ENCODE measurements at regions of chr6 and their contacts with region 1.

Region 1: GRCh38 chr6:158072083-158072721 is 90.5 kb downstream of the SYNJ2 start:
- DNase-seq: no peak
- H3K4me3 ChIP-seq: no peak overlapping the region
- H3K27me3 ChIP-seq: no peaks in the 10 kb centered on the region
- CTCF ChIP-seq: peak; percentile 81

Region 2: GRCh38 chr6:157946865-157947532 is 125.2 kb before region 1 on chr6:
- CTCF ChIA-PET with region 1: interaction called, 13 read pairs
- POLR2A ChIA-PET with region 1: no interaction called
- DNase-seq: no peak
- H3K4me3 ChIP-seq: no peak overlapping the region
- H3K27me3 ChIP-seq: no peaks in the 10 kb centered on the region
- CTCF ChIP-seq: peak; percentile 48

Region 3: DNA sequence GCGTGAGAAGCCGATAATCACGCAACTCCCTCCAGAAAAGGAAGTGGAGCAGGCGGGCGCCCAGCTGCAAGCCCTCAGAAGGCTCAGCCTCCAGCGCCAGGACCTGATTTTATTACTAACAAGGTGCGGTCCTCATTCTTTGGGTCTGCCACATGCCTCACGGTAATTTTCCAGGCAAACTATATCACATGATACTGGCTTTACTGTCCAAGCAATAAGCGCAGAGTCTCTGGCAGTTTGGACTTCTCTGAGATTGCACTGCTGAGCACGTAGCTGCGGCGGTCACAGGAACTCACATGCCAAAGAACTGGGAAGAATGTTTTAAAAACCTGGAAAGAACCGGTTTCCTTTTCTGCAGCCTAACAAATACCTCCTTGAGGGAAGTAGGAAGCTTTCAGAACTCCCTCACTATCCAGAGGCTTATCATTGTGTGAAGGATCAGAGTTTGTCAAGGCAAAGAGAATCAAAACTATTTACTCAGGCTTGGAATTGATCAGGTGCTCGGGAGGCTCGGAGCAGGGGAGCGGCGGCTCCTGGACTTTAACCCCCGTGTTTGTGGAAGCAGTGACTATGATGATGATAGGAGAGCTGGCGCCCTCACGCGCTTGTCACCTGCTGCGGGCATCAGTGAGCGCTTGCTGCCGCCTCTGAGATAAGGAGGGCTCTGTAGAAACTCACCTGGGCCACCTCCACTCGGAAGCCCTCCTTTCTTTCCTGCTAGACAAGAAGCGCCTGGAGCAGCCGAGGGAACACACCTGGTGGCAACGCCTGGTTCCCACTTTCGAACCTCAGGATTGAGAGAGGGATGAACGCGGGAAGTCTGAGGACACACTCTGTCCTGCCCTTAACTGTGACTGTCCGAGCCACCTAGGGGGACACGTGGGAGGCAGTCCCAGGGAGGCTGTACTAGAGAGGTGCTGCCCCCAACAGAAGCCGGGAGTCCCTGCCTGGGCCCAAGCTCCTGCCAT is 117.8 kb before region 1 on chr6:
- CTCF ChIA-PET with region 1: interaction called, 10 read pairs
- POLR2A ChIA-PET with region 1: no interaction called
- DNase-seq: peak; percentile 47
- H3K4me3 ChIP-seq: peak overlapping the region; percentile 19
- H3K27me3 ChIP-seq: no peaks in the 10 kb centered on the region
- CTCF ChIP-seq: no peak

Region 4: GRCh38 chr6:157981395-157982296 is 90.6 kb before region 1 on chr6 and contains the start of gene SYNJ2:
- CTCF ChIA-PET with region 1: interaction called, 21 read pairs
- POLR2A ChIA-PET with region 1: no interaction called
- DNase-seq: peak; percentile 55
- H3K4me3 ChIP-seq: peak within 1 kb of the TSS; percentile 88
- H3K27me3 ChIP-seq: no peaks in the 10 kb centered on the region
- CTCF ChIP-seq: peak; percentile 62
- polyA plus RNA-seq, gene SYNJ2: 24.3 and 29.9 TPM in 2 replicates

Region 5: DNA sequence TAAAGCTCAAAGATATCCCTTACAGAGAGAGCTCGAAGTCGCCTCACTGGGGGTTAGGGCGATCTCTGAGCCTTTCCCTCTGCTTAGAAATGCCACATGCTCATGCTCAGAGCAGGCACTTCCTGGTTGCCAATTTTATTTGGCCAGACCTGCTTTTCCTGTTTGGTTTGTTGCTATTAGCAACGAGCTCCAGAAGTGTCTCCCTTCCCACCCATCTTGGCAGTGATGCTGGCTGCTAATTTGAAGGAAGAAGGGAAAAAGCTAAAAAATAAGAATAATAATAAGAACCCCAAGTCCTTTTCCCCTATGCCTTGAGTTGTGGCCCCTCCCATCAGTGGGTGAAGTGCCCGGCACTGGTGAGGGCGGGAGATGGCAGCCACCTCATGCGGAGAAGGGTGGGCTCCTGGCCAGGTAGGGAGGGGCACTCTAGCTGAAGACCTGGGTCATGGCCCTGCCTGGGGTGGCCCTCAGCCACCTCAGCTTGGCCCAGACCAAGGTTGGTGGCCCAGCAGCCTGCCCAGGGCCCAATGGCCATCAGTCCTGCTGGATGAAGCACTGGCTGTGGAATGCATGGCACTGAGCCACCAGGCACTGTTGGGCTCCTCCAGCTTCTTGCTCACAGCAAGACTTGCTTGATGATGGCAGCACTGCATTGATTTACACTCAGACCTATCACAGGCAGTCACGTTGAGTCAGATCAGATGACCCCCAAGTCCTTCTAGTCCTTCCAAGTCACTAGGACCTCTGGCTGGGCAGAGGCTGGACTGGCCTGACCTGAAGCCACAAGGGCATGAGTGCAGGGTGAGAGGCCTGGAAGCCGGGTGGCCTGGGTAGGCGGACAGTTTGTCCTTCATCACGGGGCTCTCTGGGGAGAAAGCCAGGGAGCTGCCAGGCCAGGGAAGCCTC is 11.5 kb before region 1 on chr6:
- CTCF ChIA-PET with region 1: interaction called, 23 read pairs
- POLR2A ChIA-PET with region 1: no interaction called
- DNase-seq: peak; percentile 68
- H3K4me3 ChIP-seq: no peak overlapping the region
- H3K27me3 ChIP-seq: no peaks in the 10 kb centered on the region
- CTCF ChIP-seq: no peak

Region 6: DNA sequence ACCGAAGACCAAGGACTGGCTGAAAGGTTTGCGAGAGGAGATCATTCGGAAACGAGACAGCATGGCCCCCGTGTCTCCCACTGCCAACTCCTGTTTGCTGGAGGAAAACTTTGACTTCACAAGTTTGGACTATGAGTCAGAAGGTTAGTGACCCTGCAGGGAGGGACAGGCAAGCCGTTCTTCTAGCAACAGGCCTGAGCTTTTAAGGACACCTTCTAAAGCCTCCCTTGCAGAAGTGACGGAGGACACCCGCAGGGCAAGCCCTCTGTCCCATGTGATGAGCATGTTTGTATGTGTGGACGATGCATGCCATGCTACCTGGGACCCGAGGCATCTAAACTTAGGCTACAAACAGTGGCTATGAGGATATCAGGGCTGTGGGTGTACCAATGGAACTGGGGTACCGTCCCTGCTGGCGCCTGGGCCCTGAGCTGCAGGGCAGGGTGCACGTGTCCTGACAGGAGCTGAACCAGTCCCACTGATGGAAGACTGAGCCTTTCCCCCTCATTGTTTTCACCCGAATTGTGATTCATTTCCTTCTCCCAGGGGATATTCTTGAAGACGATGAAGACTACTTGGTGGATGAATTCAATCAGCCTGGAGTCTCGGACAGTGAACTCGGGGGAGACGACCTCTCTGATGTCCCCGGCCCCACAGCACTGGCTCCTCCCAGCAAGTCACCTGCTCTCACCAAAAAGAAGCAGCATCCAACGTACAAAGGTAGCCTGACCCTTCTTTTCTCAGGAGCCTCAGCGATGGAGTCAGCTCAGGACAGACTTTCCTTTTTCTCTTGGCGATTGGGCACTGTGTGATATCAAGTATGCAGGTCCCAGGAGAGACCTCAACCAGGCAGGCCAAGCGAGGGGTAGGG is 11.5 kb after region 1 on chr6:
- CTCF ChIA-PET with region 1: interaction called, 11 read pairs
- POLR2A ChIA-PET with region 1: no interaction called
- DNase-seq: no peak
- H3K4me3 ChIP-seq: no peak overlapping the region
- H3K27me3 ChIP-seq: no peaks in the 10 kb centered on the region
- CTCF ChIP-seq: no peak

Region 7: GRCh38 chr6:158174514-158174913 is 102.3 kb after region 1 on chr6:
- CTCF ChIA-PET with region 1: no interaction called
- POLR2A ChIA-PET with region 1: no interaction called
- DNase-seq: peak; percentile 83
- H3K4me3 ChIP-seq: no peak overlapping the region
- H3K27me3 ChIP-seq: no peaks in the 10 kb centered on the region
- CTCF ChIP-seq: no peak